Activated CD4-positive, alpha-beta T cell treated with anti-CD3 and anti-CD28 coated beads for 36 hours (primary cell): ENCODE measurements at regions of chr15 and their contacts with region 1.

Region 1: GRCh38 chr15:48494631-48495030 is 150.9 kb downstream of the FBN1 start:
- DNase-seq: no peak
- ATAC-seq: no peak
- H3K4me3 Mint-ChIP-seq: no peak overlapping the region
- H3K27ac Mint-ChIP-seq: no peak overlapping the region
- H3K4me1 Mint-ChIP-seq: no peaks in the 10 kb centered on the region
- H3K27me3 Mint-ChIP-seq: no peaks in the 10 kb centered on the region

Region 2: GRCh38 chr15:48507416-48508065 is 12.9 kb after region 1 on chr15:
- CTCF ChIA-PET with region 1: interaction called, 14 read pairs
- POLR2A ChIA-PET with region 1: no interaction called
- intact Hi-C with region 1: no loop called
- DNase-seq: peak; percentile 16
- ATAC-seq: no peak
- H3K4me3 Mint-ChIP-seq: no peak overlapping the region
- H3K27ac Mint-ChIP-seq: no peak overlapping the region
- H3K4me1 Mint-ChIP-seq: no peaks in the 10 kb centered on the region
- H3K27me3 Mint-ChIP-seq: no peaks in the 10 kb centered on the region

Region 3: GRCh38 chr15:48592221-48592731 is 97.6 kb after region 1 on chr15:
- CTCF ChIA-PET with region 1: no interaction called
- POLR2A ChIA-PET with region 1: no interaction called
- intact Hi-C with region 1: no loop called
- DNase-seq: no peak
- ATAC-seq: no peak
- H3K4me3 Mint-ChIP-seq: no peak overlapping the region
- H3K27ac Mint-ChIP-seq: no peak overlapping the region
- H3K4me1 Mint-ChIP-seq: no peaks in the 10 kb centered on the region
- H3K27me3 Mint-ChIP-seq: no peaks in the 10 kb centered on the region